Calu3 (cell line): ENCODE measurements at regions of chr14 and their contacts with region 1.

Region 1: DNA sequence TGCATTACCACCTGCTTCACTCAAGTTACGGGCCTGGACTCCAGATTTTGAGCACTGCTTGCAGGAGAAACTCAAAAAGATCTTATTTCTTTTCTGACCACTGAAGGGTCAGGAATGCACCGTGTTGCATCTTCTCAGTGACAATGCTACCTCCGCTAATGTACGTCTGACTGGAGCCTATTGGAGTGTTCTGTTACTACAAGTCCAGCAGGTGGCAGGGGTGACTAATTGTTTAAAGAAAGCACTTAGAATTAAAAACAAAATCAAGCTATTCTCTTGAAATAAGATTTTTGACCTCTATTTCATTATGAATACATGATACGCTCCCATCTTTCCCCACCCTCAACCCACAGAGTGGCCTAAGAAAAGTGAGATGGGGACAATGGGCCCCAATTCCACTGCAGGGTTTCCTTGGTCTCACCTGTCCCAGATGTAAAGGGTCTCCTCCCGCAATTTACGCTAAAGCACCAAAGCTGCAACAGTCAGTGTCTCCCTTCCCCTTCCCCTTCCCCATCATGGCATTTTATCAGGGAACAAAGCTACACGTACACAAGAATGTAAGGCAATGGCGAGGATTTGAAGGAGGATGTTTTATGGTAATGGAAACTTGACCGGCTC is 2.2 kb downstream of the TBPL2 start:
- DNase-seq: peak; percentile 46
- H3K4me3 Mint-ChIP-seq: no peak overlapping the region
- H3K27ac Mint-ChIP-seq: no peak overlapping the region
- H3K4me1 Mint-ChIP-seq: peaks cover 7% of the 10 kb centered on the region
- H3K27me3 Mint-ChIP-seq: no peaks in the 10 kb centered on the region
- CTCF ChIP-seq: peak; percentile 43

Region 2: DNA sequence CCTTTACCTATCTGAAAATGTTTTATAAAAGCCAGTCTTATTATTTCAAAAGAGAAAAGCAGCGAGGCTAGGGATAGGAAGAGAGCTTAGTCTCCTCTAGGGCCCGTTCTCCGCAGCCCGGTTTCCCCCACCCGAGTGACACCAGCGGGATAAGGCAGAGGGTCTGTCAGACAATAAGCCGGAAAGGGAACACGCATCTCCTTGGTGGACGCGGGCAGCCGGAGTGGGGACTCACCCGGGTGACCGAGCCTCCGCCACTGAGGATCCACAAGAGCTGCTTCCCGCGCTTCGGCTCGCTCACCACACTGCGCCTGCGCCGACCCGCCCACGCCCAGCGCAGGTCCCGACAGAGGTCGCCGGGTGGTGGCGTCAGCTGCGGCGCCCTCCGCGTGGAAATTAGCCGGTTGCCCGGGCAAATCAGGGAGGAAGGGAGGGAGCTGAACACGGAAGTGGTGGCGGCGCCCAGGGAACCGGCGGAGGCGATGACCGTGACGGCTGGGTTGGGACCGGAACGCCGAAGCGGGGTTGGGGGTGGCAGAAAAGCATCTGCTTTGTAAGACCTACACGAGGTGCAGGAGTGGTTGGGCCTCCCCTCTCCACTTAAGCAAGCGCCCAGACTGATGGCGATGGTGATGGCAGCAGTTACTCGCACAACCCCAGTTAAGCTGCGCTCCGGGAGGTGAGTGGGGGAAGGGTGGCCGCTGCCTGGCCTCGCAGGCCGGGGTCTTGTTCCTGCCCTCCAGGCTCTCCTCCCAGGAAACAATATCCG is 411.2 kb before region 1 on chr14 and contains the starts of genes SOCS4 and WDHD1:
- CTCF ChIA-PET with region 1: no interaction called
- intact Hi-C with region 1: no loop called
- DNase-seq: peak; percentile 97
- H3K4me3 Mint-ChIP-seq: peak within 1 kb of the TSS; percentile 89
- H3K27ac Mint-ChIP-seq: peak within 1 kb of the TSS; percentile 23
- H3K4me1 Mint-ChIP-seq: peaks cover 32% of the 10 kb centered on the region
- H3K27me3 Mint-ChIP-seq: no peaks in the 10 kb centered on the region
- CTCF ChIP-seq: no peak
- total RNA-seq, gene SOCS4: 29.9 and 31.5 TPM in 2 replicates
- total RNA-seq, gene WDHD1: 25.0 and 27.7 TPM in 2 replicates

Region 3: GRCh38 chr14:55389330-55389729 is 48.8 kb before region 1 on chr14:
- CTCF ChIA-PET with region 1: no interaction called
- intact Hi-C with region 1: no loop called
- DNase-seq: no peak
- H3K4me3 Mint-ChIP-seq: no peak overlapping the region
- H3K27ac Mint-ChIP-seq: no peak overlapping the region
- H3K4me1 Mint-ChIP-seq: peaks cover 8% of the 10 kb centered on the region
- H3K27me3 Mint-ChIP-seq: no peaks in the 10 kb centered on the region
- CTCF ChIP-seq: no peak

Region 4: GRCh38 chr14:55701638-55702037 is 263.5 kb after region 1 on chr14:
- CTCF ChIA-PET with region 1: interaction called, 4 read pairs
- intact Hi-C with region 1: loop called (anchors 5 kb)
- DNase-seq: peak; percentile 34
- H3K4me3 Mint-ChIP-seq: peak overlapping the region; percentile 0
- H3K27ac Mint-ChIP-seq: peak overlapping the region; percentile 20
- H3K4me1 Mint-ChIP-seq: peaks cover 68% of the 10 kb centered on the region
- H3K27me3 Mint-ChIP-seq: no peaks in the 10 kb centered on the region
- CTCF ChIP-seq: no peak

Region 5: DNA sequence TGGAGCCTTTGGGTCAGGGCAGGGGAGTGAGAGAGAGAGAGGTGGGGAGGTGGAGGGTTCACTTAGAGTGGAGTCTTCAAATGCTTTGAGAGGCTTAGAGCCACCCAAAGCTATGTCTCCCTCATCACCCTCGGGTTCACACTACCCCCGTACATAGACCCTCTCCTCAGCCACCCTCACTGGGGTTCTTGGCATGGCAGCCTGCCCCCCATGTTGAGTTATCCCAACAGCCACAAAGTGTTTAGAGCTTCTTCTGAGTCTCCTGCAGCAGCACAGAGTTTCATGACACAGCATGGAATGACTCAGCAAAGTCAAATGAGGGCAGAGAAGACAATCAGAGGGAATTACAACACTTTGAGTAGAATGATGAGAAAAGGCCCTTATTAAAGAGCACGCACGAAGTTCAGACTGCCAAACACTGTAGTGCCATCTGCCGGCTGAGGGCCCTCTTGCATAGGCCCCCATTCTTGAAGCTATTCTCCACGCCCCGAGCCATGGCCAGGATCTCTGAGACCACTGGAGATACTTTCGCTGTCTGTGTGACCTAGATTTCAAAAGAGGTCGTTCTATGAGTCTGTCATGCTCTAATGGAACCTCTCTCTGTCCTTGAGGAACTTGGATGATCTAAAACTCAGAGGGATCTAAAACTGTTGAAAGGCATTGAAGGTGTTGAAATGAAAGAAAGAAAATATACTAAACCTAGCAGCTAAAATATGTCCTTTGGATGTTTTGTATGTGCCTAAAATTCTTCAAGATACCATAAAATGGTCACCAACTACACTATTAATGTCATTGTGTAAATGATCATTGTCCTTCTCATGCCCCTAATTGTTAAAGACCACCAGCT is 901.9 kb after region 1 on chr14:
- CTCF ChIA-PET with region 1: interaction called, 4 read pairs
- intact Hi-C with region 1: loop called (anchors 1 kb)
- DNase-seq: peak; percentile 58
- H3K4me3 Mint-ChIP-seq: no peak overlapping the region
- H3K27ac Mint-ChIP-seq: peak overlapping the region; percentile 7
- H3K4me1 Mint-ChIP-seq: peaks cover 13% of the 10 kb centered on the region
- H3K27me3 Mint-ChIP-seq: no peaks in the 10 kb centered on the region
- CTCF ChIP-seq: no peak

Region 6: GRCh38 chr14:56422703-56423213 is 984.6 kb after region 1 on chr14:
- CTCF ChIA-PET with region 1: interaction called, 4 read pairs
- intact Hi-C with region 1: loop called (anchors 2 kb)
- DNase-seq: peak; percentile 35
- H3K4me3 Mint-ChIP-seq: no peak overlapping the region
- H3K27ac Mint-ChIP-seq: no peak overlapping the region
- H3K4me1 Mint-ChIP-seq: no peaks in the 10 kb centered on the region
- H3K27me3 Mint-ChIP-seq: peaks cover 19% of the 10 kb centered on the region
- CTCF ChIP-seq: peak; percentile 23

Region 7: GRCh38 chr14:56474419-56475022 is 1036.3 kb after region 1 on chr14:
- CTCF ChIA-PET with region 1: interaction called, 10 read pairs
- intact Hi-C with region 1: loop called (anchors 1 kb)
- DNase-seq: peak; percentile 20
- H3K4me3 Mint-ChIP-seq: no peak overlapping the region
- H3K27ac Mint-ChIP-seq: no peak overlapping the region
- H3K4me1 Mint-ChIP-seq: no peaks in the 10 kb centered on the region
- H3K27me3 Mint-ChIP-seq: peaks cover 26% of the 10 kb centered on the region
- CTCF ChIP-seq: no peak

Region 8: GRCh38 chr14:56491299-56492285 is 1053.4 kb after region 1 on chr14:
- CTCF ChIA-PET with region 1: interaction called, 7 read pairs
- intact Hi-C with region 1: loop called (anchors 1 kb)
- DNase-seq: peak; percentile 41
- H3K4me3 Mint-ChIP-seq: no peak overlapping the region
- H3K27ac Mint-ChIP-seq: no peak overlapping the region
- H3K4me1 Mint-ChIP-seq: no peaks in the 10 kb centered on the region
- H3K27me3 Mint-ChIP-seq: peaks cover 65% of the 10 kb centered on the region
- CTCF ChIP-seq: peak; percentile 66